Activated CD4-positive, alpha-beta T cell treated with anti-CD3 and anti-CD28 coated beads, Interleukin-2, amount 10 ng/mL, durations not matched to agents 24 days and 14 days (primary cell): ENCODE measurements at regions of chr6 and their contacts with region 1.

Region 1: DNA sequence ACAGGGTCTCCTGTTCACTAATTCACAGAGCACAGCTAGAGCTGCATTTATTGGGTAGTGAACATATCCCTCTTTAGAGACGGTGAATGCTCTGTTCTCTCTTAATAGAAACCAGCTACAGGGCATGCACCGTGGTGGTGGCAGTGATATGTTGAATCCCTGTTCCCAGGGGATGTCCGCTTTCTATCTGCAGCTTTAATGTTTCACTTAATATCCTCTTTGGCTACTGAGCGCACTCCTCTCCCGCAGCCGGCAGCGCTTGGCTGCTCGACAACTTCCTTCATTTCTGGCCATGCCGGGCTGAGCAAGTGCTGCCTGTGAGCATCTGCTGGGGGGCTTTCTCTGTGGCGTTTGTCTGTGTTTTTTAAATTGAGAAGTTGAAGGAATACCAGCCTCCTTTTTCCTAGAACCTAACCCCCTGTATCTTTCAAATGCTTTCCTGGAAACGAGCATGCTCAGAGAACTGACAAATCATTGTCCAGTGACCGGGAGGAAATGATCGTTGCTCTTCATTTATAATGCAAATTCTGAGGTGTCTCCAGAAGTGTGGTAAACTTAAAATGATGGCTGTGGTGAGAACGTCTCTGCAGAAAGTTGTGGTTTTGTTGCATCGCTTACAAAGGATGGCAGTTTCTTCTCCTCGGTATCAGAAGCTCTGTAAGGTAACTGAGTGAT is 297.9 kb downstream of the UTRN start:
- DNase-seq: peak; percentile 91
- H3K4me3 Mint-ChIP-seq: peak overlapping the region; percentile 88
- H3K27ac Mint-ChIP-seq: peak overlapping the region; percentile 92
- H3K4me1 Mint-ChIP-seq: peaks cover 49% of the 10 kb centered on the region
- H3K27me3 Mint-ChIP-seq: no peaks in the 10 kb centered on the region

Region 2: GRCh38 chr6:144559865-144560593 is 23.0 kb before region 1 on chr6:
- intact Hi-C with region 1: loop called (anchors 1 kb)
- DNase-seq: peak; percentile 87
- H3K4me3 Mint-ChIP-seq: peak overlapping the region; percentile 80
- H3K27ac Mint-ChIP-seq: peak overlapping the region; percentile 93
- H3K4me1 Mint-ChIP-seq: peaks cover 28% of the 10 kb centered on the region
- H3K27me3 Mint-ChIP-seq: no peaks in the 10 kb centered on the region

Region 3: GRCh38 chr6:144675231-144675861 is 92.3 kb after region 1 on chr6:
- intact Hi-C with region 1: loop called (anchors 2 kb)
- DNase-seq: peak; percentile 80
- H3K4me3 Mint-ChIP-seq: peak overlapping the region; percentile 42
- H3K27ac Mint-ChIP-seq: peak overlapping the region; percentile 84
- H3K4me1 Mint-ChIP-seq: peaks cover 35% of the 10 kb centered on the region
- H3K27me3 Mint-ChIP-seq: no peaks in the 10 kb centered on the region

Region 4: DNA sequence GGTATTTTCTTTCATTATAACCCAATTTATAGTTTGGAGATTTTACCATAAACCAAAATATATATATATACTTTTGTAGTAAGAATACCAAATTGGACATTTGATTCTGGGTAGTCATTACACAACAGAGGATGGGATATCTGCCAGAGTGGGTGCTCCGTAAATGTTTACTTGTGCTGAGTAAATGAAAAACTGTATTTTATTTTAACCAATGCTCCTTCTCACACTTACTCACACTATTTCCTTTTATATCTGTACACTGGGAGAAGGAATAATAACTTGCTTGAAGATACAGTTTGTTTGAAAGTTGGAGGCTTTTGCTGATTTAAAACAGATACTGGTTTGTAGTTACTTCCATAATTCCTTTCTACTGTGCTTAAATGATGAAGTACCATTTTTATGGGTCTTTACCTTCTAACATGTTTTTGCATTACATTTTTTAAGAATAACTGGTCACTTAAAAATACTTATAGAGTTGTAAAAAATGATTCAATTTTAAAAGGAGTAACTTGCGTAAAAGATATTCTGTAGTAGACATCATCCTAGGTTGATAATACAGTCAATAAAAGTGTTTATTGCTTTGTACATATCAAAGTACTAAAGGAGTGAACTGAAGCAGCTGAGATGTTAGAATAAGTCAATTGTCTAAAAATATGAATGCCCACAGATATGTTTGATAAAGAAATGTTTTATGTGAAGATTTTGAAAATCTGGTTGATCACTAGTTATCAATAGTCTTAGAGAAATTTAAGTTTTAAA is 113.7 kb after region 1 on chr6:
- intact Hi-C with region 1: no loop called
- DNase-seq: no peak
- H3K4me3 Mint-ChIP-seq: no peak overlapping the region
- H3K27ac Mint-ChIP-seq: no peak overlapping the region
- H3K4me1 Mint-ChIP-seq: no peaks in the 10 kb centered on the region
- H3K27me3 Mint-ChIP-seq: no peaks in the 10 kb centered on the region

Region 5: GRCh38 chr6:144931172-144932035 is 348.3 kb after region 1 on chr6:
- intact Hi-C with region 1: loop called (anchors 1 kb)
- DNase-seq: peak; percentile 82
- H3K4me3 Mint-ChIP-seq: no peak overlapping the region
- H3K27ac Mint-ChIP-seq: no peak overlapping the region
- H3K4me1 Mint-ChIP-seq: peaks cover 2% of the 10 kb centered on the region
- H3K27me3 Mint-ChIP-seq: peaks cover 20% of the 10 kb centered on the region

Region 6: GRCh38 chr6:145214570-145214969 is 631.5 kb after region 1 on chr6:
- intact Hi-C with region 1: loop called (anchors 1 kb)
- DNase-seq: peak; percentile 61
- H3K4me3 Mint-ChIP-seq: no peak overlapping the region
- H3K27ac Mint-ChIP-seq: no peak overlapping the region
- H3K4me1 Mint-ChIP-seq: peaks cover 4% of the 10 kb centered on the region
- H3K27me3 Mint-ChIP-seq: peaks cover 7% of the 10 kb centered on the region